BJ (cell line): ENCODE measurements at regions of chr11 and their contacts with region 1.

Region 1: DNA sequence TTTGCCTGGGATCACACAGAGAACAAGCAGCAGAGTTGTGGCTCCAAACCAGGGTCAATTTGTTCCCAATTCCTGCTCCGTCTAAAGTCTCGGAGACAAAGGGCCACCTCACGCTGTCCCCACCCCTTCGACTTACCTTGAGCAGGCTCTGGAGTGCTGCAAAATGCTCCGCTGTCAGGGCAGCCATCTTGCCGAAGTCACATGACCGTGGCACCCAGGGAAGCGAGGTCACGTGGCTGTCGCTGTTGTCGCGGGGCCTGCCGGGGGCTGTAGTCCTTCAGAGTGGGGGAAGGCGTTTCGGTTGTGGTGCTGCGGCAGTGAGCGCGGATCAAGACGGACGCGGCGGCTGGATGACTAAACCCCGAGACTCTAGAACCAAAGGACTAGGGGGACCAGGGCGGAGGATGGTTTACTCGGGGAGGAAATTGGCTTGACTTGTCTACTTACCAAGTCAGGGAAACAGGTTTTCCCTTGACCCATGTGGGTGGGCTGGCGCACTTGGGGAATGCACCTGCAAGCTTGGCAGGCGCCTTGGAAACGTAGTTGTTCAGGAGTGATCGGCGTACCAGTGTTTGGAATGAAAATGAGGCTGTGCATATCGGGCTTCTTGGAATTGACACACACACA is at the start of gene COMMD9:
- DNase-seq: peak; percentile 59
- H3K4me3 ChIP-seq: peak within 1 kb of the TSS; percentile 69
- H3K27me3 ChIP-seq: no peaks in the 10 kb centered on the region
- CTCF ChIP-seq: no peak
- polyA plus RNA-seq, gene COMMD9: 68.1 and 89.9 TPM in 2 replicates

Region 2: DNA sequence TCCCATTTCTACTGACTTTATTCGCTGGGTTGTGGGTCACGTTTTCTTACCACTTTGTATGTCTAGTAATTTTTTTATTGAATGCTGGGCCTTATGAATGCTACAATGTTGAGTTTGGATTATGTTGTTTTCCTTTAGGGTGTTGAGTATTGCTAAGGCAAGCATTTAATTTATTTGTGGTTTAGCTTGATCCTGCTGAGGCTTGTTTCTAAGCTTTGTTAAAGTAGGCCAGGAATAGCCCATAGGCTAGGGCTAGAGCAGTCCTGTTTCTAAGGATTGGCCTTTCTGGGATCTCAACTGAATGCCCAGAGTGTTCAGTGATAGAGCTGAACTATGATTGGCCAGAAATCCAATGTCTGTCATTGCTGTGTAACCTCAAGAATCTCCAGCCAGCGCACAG is 401.6 kb before region 1 on chr11:
- CTCF ChIA-PET with region 1: no interaction called
- POLR2A ChIA-PET with region 1: no interaction called
- DNase-seq: no peak
- H3K4me3 ChIP-seq: no peak overlapping the region
- H3K27me3 ChIP-seq: peaks cover 7% of the 10 kb centered on the region
- CTCF ChIP-seq: no peak

Region 3: DNA sequence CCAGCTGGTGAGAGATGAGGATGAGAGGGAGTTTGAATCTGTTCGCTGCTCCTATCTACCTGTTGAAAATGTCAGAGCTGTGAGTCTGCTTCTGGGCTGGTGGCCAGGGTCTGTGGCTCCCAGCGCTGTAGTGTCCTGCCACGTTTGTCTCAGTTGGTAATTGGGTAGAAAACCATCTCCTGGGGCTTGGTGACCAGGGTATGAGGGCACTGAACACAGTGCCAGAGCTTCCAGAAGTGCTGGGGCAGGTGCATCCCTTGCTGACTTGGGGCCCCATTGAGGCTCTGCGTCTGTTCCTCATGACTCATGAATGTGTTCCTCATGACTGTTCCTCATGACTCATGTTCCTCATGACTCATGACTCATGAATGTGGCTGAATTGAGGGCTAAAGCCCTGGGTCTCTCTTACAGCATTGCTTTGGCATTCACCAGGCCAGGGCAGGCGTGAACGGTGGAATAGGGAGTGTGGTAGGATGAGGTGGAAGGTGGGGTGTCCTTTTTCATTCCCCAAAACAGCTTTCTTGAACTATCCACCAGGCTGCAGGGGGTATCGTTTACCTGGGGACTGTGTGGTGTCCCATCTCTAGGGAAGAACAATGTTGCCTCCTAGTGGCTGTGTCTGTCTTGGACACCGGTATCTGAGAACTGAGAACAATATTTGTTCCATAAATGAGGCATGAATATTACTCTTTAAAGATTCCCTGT is 139.6 kb before region 1 on chr11:
- CTCF ChIA-PET with region 1: no interaction called
- POLR2A ChIA-PET with region 1: no interaction called
- DNase-seq: peak; percentile 88
- H3K4me3 ChIP-seq: no peak overlapping the region
- H3K27me3 ChIP-seq: no peaks in the 10 kb centered on the region
- CTCF ChIP-seq: peak; percentile 52

Region 4: GRCh38 chr11:36230779-36231699 is 58.3 kb before region 1 on chr11:
- CTCF ChIA-PET with region 1: no interaction called
- POLR2A ChIA-PET with region 1: no interaction called
- DNase-seq: peak; percentile 35
- H3K4me3 ChIP-seq: no peak overlapping the region
- H3K27me3 ChIP-seq: no peaks in the 10 kb centered on the region
- CTCF ChIP-seq: no peak

Region 5: GRCh38 chr11:36258730-36259360 is 30.5 kb before region 1 on chr11:
- CTCF ChIA-PET with region 1: no interaction called
- POLR2A ChIA-PET with region 1: no interaction called
- DNase-seq: no peak
- H3K4me3 ChIP-seq: no peak overlapping the region
- H3K27me3 ChIP-seq: peaks cover 2% of the 10 kb centered on the region
- CTCF ChIP-seq: peak; percentile 78

Region 6: DNA sequence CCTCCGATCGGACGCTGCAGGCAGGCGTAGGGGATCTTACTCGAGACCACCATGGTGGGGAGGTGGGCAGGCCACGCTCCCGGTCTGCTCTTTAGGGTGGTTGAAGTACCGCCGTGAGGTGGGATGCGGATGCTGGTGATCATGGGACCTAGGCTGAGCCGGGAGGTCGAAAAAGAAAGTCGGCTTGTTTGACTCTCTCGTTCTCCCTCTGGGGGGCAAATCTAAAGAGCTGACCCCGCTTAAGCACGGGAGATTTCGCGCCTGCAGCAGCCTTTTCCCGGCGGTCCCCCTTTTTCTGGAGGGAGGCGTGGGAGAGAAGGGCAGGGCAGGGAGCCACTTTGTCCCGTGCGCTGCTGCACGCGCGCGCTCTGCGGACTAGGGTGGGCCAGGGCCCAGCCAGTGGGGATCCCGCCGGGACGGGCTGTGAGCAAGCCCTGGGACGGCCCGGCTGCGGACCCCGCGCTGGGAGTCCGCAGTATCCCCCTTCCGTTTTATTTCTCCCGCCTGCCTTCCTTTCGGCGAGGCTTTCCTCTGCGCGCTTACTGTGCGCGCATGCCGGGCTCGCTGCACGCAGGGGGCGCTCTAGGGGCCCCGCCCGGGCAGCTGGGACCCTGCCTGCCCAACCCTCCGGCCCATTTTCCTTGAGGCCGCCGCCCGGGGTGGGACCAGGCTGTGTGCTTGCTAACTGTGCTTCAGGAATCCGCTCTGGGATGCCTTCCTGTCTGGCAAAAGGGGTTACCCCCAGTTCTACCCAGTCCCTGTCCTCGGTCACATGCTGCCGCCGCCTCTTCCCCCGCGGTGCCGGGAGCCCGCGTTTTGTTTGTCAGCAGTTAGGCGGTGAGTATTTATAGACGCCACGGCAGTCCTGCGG is 87.8 kb after region 1 on chr11:
- CTCF ChIA-PET with region 1: interaction called, 39 read pairs
- POLR2A ChIA-PET with region 1: no interaction called
- DNase-seq: no peak
- H3K4me3 ChIP-seq: peak overlapping the region; percentile 73
- H3K27me3 ChIP-seq: no peaks in the 10 kb centered on the region
- CTCF ChIP-seq: peak; percentile 84

Region 7: DNA sequence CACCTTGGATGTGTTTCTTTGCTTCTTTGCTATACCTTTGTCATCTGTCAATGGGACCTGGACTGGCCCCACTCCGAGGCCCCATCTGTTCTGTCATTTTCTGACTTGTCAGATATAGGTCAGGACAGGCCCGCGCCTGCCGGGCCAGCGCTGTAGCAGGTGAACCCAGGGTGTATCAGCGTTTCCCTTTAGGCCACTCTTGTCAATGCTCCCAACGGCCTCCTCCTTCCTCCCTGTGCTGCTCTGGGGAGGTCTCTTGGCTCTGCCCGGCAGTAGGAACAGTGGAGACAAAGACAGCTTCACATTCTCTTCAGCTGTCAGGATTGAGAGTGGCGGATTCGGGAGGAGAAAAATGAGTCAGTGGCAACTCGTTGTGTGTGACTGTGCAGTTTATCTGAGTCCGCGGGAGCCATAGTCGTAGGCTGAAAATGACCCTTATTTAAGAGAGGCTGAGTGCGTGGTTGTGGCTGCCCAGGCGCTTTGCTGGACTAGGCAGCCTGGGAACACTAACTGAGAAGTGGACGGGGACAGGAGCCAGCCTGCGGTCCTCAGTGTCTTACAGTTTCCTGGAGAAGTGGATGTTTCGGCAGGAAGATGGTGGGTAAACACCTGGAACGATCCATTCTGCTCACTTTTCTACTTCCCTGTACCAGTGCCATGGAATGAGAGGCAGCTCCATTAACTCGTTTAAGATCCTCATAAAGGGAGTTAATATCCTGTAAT is 109.1 kb after region 1 on chr11:
- CTCF ChIA-PET with region 1: interaction called, 12 read pairs
- POLR2A ChIA-PET with region 1: no interaction called
- DNase-seq: no peak
- H3K4me3 ChIP-seq: no peak overlapping the region
- H3K27me3 ChIP-seq: no peaks in the 10 kb centered on the region
- CTCF ChIP-seq: no peak

Region 8: DNA sequence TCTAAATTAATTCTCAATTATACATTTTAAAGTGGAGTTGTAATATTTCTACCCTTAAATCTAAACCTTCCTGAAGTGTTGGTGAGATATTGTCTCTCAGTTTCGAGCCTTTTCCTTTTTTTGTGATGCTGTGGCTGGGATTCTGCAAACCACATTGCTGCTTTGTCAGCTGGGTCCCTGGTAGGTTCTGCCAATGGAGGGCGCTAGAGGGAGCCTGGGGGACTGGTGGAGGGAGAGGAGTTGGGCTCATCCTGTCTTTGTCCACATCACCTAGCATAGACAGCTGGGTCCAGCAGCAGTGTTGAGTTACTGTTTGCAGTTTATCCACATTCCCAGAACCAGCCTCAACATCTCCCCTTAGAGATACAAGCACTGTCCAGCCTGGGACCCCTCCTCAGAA is 179.7 kb after region 1 on chr11:
- CTCF ChIA-PET with region 1: interaction called, 41 read pairs
- POLR2A ChIA-PET with region 1: no interaction called
- DNase-seq: no peak
- H3K4me3 ChIP-seq: no peak overlapping the region
- H3K27me3 ChIP-seq: no peaks in the 10 kb centered on the region
- CTCF ChIP-seq: peak; percentile 51

Region 9: DNA sequence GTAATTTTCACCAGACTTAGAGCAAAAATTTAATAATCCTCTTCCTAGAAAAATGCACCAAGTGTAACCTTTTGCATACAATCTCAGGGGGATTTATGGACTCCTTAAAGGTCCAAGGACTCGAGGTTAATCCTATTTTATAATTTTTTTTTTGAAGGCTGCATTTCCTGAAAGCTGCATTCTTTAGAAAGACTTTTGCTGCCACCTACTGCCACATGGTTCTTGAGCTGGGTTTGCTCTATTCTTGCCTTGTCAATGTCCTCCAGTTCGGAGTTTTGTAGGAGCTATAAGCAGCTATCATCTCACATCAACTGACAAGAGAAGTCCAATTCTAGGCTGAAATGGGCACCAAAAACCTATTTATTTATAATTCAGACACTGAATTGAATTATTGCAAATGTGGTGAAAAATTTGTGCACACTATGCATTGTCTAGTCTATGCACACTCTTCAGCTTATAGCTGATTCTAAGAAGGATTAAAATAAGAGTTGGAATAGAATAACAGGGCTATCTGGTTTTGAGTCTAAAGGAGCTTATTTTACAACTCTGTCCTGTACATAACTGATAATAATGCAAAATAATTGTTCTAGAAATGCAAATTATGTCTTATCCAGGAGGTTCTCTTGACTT is 189.5 kb after region 1 on chr11:
- CTCF ChIA-PET with region 1: interaction called, 205 read pairs
- POLR2A ChIA-PET with region 1: no interaction called
- DNase-seq: no peak
- H3K4me3 ChIP-seq: no peak overlapping the region
- H3K27me3 ChIP-seq: no peaks in the 10 kb centered on the region
- CTCF ChIP-seq: peak; percentile 69

Region 10: DNA sequence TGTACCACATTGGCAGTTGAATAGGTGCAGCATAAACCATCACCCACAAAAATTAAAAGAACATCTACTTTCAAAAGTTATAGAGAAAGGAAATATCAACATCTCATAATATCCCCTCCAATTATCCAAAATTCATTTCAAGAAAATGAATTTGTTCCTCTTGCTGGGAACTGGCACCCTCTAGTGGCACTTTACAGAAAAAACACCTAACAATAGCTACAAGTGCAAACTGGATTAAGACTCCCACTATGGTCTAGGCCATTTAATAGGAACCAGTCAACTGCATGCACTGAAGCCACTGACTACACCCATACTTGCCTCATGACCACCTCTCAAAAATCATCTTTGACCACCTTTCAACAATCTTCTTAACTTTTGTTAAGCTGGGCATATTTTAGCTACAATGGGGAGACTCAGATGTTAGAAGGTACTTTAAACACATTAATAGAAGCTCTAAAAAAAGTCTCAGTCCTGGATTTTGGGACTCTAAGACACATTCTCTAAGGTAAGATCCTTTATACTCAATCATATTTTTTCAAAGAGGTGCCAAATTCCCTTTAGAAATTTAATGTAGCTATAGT is 203.5 kb after region 1 on chr11:
- CTCF ChIA-PET with region 1: interaction called, 63 read pairs
- POLR2A ChIA-PET with region 1: interaction called, 4 read pairs
- DNase-seq: no peak
- H3K4me3 ChIP-seq: no peak overlapping the region
- H3K27me3 ChIP-seq: no peaks in the 10 kb centered on the region
- CTCF ChIP-seq: peak; percentile 78

Region 11: GRCh38 chr11:36509694-36510566 is 220.6 kb after region 1 on chr11 and contains the start of gene TRAF6:
- CTCF ChIA-PET with region 1: interaction called, 10 read pairs
- POLR2A ChIA-PET with region 1: no interaction called
- DNase-seq: no peak
- H3K4me3 ChIP-seq: peak within 1 kb of the TSS; percentile 100
- H3K27me3 ChIP-seq: no peaks in the 10 kb centered on the region
- CTCF ChIP-seq: peak; percentile 80
- polyA plus RNA-seq, gene TRAF6: 6.2 and 9.0 TPM in 2 replicates